K562 (cell line): ENCODE measurements at regions of chr1 and their contacts with region 1.

Region 1: GRCh38 chr1:11907275-11908094 is 18.7 kb downstream of the KIAA2013 start:
- DNase-seq: peak; percentile 86 to 98 (median 90)
- ATAC-seq: peak; percentile 72
- H3K4me3 ChIP-seq: no peak overlapping the region
- H3K27ac ChIP-seq: peak overlapping the region; percentile 100
- H3K4me1 ChIP-seq: peaks cover 15 to 27% of the 10 kb centered on the region in 2 experiments
- H3K27me3 ChIP-seq: no peaks in the 10 kb centered on the region
- CTCF ChIP-seq: peak; percentile 87 to 98 (median 96)
- EP300 ChIP-seq: no peak
- POLR2A ChIP-seq: no peak
- RAD21 ChIP-seq: peak; percentile 61 to 78

Region 2: GRCh38 chr1:11671544-11672286 is 235.8 kb before region 1 on chr1:
- CTCF ChIA-PET with region 1: no interaction called
- POLR2A ChIA-PET with region 1: interaction called, 10 read pairs
- in situ Hi-C with region 1: no loop called
- intact Hi-C with region 1: no loop called
- DNase-seq: peak; percentile 66 to 87 (median 77)
- ATAC-seq: peak; percentile 82
- H3K4me3 ChIP-seq: no peak overlapping the region
- H3K27ac ChIP-seq: peak overlapping the region; percentile 67
- H3K4me1 ChIP-seq: peaks cover 20 to 57% of the 10 kb centered on the region in 2 experiments
- H3K27me3 ChIP-seq: no peaks in the 10 kb centered on the region
- CTCF ChIP-seq: no peak; a peak in 1 of 6 replicates
- EP300 ChIP-seq: peak; percentile 95
- POLR2A ChIP-seq: peak; percentile 53
- RAD21 ChIP-seq: peak in 1 of 2 experiments; percentile 8; a peak in 1 of 4 replicates

Region 3: GRCh38 chr1:11790880-11791715 is 116.4 kb before region 1 on chr1:
- CTCF ChIA-PET with region 1: no interaction called
- POLR2A ChIA-PET with region 1: interaction called, 107 read pairs
- in situ Hi-C with region 1: no loop called
- intact Hi-C with region 1: no loop called
- DNase-seq: peak; percentile 71 to 83 (median 74)
- ATAC-seq: peak; percentile 9
- H3K4me3 ChIP-seq: no peak overlapping the region
- H3K27ac ChIP-seq: peak overlapping the region; percentile 73
- H3K4me1 ChIP-seq: peaks cover 70 to 91% of the 10 kb centered on the region in 2 experiments
- H3K27me3 ChIP-seq: no peaks in the 10 kb centered on the region
- CTCF ChIP-seq: no peak
- EP300 ChIP-seq: peak; percentile 57; the same call in 1 of the 2 replicates
- POLR2A ChIP-seq: 0 out of 2 replicates have a peak, but pooled peaks have one; percentile 34
- RAD21 ChIP-seq: peak in 1 of 2 experiments; percentile 17; a peak in 1 of 4 replicates

Region 4: DNA sequence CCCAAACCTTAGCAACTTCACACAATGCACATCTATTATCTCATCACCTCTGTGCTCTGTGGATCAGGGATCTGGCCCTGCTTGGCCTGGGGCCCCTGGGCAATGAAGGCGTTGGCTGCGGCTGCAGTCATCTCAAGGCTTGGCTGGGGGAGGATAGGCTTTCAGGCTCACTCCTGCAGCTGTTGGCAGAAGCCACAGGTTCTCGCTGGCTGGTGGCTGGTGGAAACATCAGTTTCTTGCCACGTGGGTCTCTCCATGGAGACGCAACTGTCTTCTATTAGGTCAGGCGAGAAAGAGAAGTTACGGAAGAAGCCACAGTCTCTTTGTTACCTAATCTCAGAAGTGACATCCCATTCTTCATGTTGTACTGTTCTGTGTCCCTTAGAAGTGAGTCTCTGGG is 56.3 kb before region 1 on chr1:
- CTCF ChIA-PET with region 1: no interaction called
- POLR2A ChIA-PET with region 1: interaction called, 304 read pairs
- in situ Hi-C with region 1: no loop called
- intact Hi-C with region 1: no loop called
- DNase-seq: peak in 1 of 4 experiments; percentile 35
- ATAC-seq: peak; percentile 61
- H3K4me3 ChIP-seq: no peak overlapping the region
- H3K27ac ChIP-seq: no peak overlapping the region
- H3K4me1 ChIP-seq: peaks cover 6 to 11% of the 10 kb centered on the region in 2 experiments; a peak in 4 of 5 replicates
- H3K27me3 ChIP-seq: peaks cover 6 to 22% of the 10 kb centered on the region in 2 experiments; a peak in 3 of 5 replicates
- CTCF ChIP-seq: no peak
- EP300 ChIP-seq: no peak
- POLR2A ChIP-seq: no peak
- RAD21 ChIP-seq: no peak

Region 5: GRCh38 chr1:11925938-11926292 is 18.4 kb after region 1 on chr1:
- CTCF ChIA-PET with region 1: no interaction called
- POLR2A ChIA-PET with region 1: interaction called, 236 read pairs
- in situ Hi-C with region 1: no loop called
- intact Hi-C with region 1: no loop called
- DNase-seq: peak in 1 of 4 experiments; percentile 49
- ATAC-seq: peak; percentile 12
- H3K4me3 ChIP-seq: peak overlapping the region; percentile 71
- H3K27ac ChIP-seq: peak overlapping the region; percentile 50; the same call in 2 of the 3 replicates
- H3K4me1 ChIP-seq: peaks cover 28 to 58% of the 10 kb centered on the region in 2 experiments
- H3K27me3 ChIP-seq: no peaks in the 10 kb centered on the region
- CTCF ChIP-seq: no peak
- EP300 ChIP-seq: no peak
- POLR2A ChIP-seq: no peak
- RAD21 ChIP-seq: no peak

Region 6: GRCh38 chr1:12001996-12002493 is 94.6 kb after region 1 on chr1:
- CTCF ChIA-PET with region 1: no interaction called
- POLR2A ChIA-PET with region 1: interaction called, 52 read pairs
- in situ Hi-C with region 1: no loop called
- intact Hi-C with region 1: no loop called
- DNase-seq: no peak
- ATAC-seq: no peak; the same call in 2 of the 3 replicates
- H3K4me3 ChIP-seq: no peak overlapping the region
- H3K27ac ChIP-seq: no peak overlapping the region; the same call in 2 of the 3 replicates
- H3K4me1 ChIP-seq: peaks cover 24 to 30% of the 10 kb centered on the region in 2 experiments; a peak in 4 of 5 replicates
- H3K27me3 ChIP-seq: no peaks in the 10 kb centered on the region
- CTCF ChIP-seq: no peak
- EP300 ChIP-seq: no peak
- POLR2A ChIP-seq: no peak
- RAD21 ChIP-seq: no peak

Region 7: GRCh38 chr1:12065872-12066271 is 158.4 kb after region 1 on chr1:
- CTCF ChIA-PET with region 1: no interaction called
- POLR2A ChIA-PET with region 1: interaction called, 10 read pairs
- in situ Hi-C with region 1: no loop called
- intact Hi-C with region 1: no loop called
- DNase-seq: no peak
- ATAC-seq: no peak
- H3K4me3 ChIP-seq: no peak overlapping the region
- H3K27ac ChIP-seq: no peak overlapping the region; the same call in 2 of the 3 replicates
- H3K4me1 ChIP-seq: peaks cover 31% of the 10 kb centered on the region in 2 experiments
- H3K27me3 ChIP-seq: no peaks in the 10 kb centered on the region
- CTCF ChIP-seq: no peak
- EP300 ChIP-seq: peak; percentile 83
- POLR2A ChIP-seq: no peak
- RAD21 ChIP-seq: no peak